Spleen (tissue), 13 donors: ENCODE measurements at regions of chr11 and their contacts with region 1.

Region 1: DNA sequence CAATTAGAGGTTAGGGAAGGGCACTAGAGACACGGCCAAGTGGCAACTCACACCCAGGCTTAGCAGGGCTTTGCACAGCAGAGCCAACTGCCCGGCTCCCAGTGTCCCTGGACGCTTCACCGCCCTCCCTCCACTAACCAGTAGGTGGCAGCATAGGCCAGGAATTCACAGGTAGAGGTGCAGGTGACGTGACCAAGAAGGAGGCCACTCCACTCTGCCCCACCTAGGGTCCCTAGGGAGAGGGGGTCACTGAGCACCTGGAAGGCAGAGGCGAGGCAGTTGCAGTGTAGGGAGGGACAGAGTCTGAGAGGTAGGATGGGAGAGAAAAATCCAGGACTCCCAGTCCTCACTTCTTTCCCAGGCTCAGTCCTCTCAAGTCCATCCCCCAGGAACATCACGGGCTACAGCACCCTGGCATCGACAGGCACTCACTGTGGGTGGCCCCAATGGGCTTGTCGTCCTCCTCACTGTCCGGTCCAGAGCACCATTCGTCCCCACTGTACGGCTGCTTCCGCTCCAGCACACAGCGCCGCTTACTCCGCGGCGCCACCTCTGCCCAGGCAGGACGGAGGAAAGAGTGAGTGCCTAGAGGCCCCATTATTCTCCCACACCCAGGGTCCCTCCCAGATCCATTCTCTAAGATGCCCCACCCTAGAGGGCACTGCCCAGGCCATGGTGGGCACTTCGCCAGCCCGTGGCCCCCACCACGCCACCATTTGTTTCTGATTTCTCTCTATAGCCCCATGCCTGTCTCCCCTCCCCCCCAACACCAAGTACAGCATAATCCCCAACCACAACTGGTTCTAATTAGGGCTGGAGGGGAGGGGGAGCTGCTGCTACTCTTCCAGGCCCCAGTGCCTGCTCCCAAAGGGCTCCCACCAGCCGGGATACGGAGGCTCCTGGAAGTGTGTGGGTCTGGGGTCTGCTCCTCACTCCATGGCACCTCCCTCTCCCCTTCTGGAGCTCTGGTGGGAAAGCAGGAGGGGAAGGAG is 18.4 kb downstream of the BCL9L start:
- DNase-seq: peak; percentile 94
- H3K4me3 ChIP-seq: no peak overlapping the region
- H3K27ac ChIP-seq: peak overlapping the region in 4 of 8 donors; percentile 39 to 98 (median 95)
- H3K4me1 ChIP-seq: peaks cover 32 to 79% (median 53%) of the 10 kb centered on the region in 6 donors
- H3K27me3 ChIP-seq: peaks cover 0 to 8% (median 0%) of the 10 kb centered on the region in 7 donors
- CTCF ChIP-seq: peak; percentile 93 to 99 (median 97)
- POLR2A ChIP-seq: no peak

Region 2: DNA sequence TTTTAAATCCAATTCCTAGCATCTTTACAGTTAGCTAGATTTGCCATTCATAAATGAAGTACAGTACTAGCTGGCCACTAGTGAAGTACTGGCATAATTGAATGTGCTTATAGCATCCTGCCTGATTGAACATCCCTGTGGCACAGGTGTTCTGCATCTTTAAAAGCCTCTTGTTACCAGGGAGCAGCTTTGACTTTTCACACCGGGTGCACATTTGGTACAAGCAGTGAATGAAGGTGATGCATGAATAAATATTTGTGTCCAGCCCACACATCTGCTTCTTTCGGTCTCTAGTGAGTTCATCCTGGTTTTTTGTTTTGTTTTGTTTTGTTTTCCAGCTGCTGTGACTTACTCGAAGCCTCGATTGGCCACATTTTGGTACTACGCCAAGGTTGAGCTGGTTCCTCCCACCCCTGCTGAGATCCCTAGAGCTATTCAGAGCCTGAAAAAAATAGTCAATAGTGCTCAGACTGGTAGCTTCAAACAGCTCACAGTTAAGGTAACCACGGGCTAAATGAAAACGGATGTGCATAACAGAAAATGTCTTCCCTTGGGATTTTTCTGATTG is 500.7 kb before region 1 on chr11:
- intact Hi-C with region 1: no loop called
- DNase-seq: no peak
- H3K4me3 ChIP-seq: no peak overlapping the region
- H3K27ac ChIP-seq: no peak overlapping the region
- H3K4me1 ChIP-seq: peaks cover 19 to 84% (median 42%) of the 10 kb centered on the region in 6 donors
- H3K27me3 ChIP-seq: no peaks in the 10 kb centered on the region
- CTCF ChIP-seq: no peak
- POLR2A ChIP-seq: no peak

Region 3: GRCh38 chr11:118804094-118804493 is 103.3 kb before region 1 on chr11:
- intact Hi-C with region 1: no loop called
- DNase-seq: no peak
- H3K4me3 ChIP-seq: no peak overlapping the region
- H3K27ac ChIP-seq: no peak overlapping the region
- H3K4me1 ChIP-seq: peaks cover 0 to 11% (median 0%) of the 10 kb centered on the region in 6 donors
- H3K27me3 ChIP-seq: no peaks in the 10 kb centered on the region
- CTCF ChIP-seq: no peak
- POLR2A ChIP-seq: no peak

Region 4: DNA sequence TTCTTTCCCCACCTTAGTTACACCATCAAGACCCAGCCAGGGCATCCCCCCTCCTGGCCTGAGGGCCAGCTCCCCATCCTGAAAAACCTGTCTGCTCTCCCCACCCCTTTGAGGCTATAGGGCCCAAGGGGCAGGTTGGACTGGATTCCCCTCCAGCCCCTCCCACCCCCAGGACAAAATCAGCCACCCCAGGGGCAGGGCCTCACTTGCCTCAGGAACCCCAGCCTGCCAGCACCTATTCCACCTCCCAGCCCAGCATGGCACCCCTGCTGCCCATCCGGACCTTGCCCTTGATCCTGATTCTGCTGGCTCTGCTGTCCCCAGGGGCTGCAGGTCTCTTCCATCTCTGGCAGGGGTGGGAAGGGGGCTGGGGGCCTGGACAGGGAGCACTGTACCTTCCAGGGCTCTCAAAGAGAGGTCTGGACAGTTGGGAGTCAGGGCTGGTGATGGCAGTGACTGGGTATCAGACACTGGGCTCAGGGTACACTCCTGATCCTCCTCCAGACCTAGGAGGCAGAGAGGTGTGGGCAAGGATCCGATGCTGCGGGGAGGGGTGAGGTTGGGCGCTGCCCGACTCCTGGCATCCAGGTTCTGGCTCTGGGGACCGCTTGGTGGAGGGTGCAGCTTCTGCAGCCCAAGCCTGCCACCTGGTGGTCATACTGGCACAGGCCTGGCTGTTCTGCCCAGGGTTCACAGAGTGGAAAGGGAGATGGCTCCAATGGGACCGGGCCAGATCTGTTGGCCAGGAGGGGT is 48.9 kb after region 1 on chr11 and contains the start of gene UPK2:
- intact Hi-C with region 1: loop called (anchors 5 kb)
- DNase-seq: peak; percentile 96
- H3K4me3 ChIP-seq: no peak within 1 kb of the TSS
- H3K27ac ChIP-seq: no peak within 1 kb of the TSS
- H3K4me1 ChIP-seq: peaks cover 0 to 9% (median 0%) of the 10 kb centered on the region in 6 donors
- H3K27me3 ChIP-seq: peaks cover 0 to 28% (median 0%) of the 10 kb centered on the region in 7 donors
- CTCF ChIP-seq: peak; percentile 94 to 98 (median 97)
- POLR2A ChIP-seq: no peak
- total RNA-seq, gene UPK2: not detected